Heart left ventricle (tissue), 16 donors: ENCODE measurements at regions of chr19 and their contacts with region 1.

Region 1: DNA sequence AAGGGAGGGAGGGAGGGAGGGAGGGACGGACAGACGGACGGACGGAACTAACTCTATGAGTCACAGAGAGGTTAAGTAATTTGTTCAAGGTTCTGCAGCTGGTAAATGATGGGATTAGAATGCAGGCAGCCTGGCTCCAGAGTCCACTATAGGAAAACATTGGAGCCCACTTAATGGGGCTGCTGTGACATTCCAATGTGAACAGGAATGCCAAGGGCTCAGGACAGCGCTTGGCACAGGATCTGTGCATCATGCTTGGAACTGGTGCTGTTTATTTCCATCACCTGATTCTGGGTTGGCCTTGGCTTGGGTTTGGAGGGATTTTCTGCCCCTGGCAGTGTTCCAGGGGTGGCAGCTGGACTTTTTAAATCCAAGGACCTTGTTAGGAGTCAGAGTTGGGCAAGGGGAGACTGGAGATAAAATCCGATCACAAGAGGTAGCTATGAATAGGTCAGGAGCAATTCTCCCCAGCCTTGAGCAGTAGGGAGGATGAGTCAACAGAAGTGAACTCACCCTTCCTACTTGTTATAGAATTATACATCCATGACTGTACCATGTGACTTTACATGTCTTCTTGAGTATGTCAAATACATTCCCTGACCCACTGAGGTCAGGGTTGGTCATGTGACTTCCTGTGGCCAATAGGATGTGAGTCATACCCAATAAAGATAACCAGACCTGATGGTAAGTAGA is 7.8 kb upstream of the HIF3A start:
- DNase-seq: peak in 4 of 5 donors; percentile 46 to 77 (median 60)
- ATAC-seq: peak; percentile 78 to 91 (median 86)
- H3K4me3 ChIP-seq: no peak overlapping the region
- H3K27ac ChIP-seq: peak overlapping the region; percentile 16 to 85 (median 68)
- H3K4me1 ChIP-seq: peaks cover 0 to 20% (median 10%) of the 10 kb centered on the region in 12 donors
- H3K27me3 ChIP-seq: no peaks in the 10 kb centered on the region
- CTCF ChIP-seq: no peak
- POLR2A ChIP-seq: no peak

Region 2: DNA sequence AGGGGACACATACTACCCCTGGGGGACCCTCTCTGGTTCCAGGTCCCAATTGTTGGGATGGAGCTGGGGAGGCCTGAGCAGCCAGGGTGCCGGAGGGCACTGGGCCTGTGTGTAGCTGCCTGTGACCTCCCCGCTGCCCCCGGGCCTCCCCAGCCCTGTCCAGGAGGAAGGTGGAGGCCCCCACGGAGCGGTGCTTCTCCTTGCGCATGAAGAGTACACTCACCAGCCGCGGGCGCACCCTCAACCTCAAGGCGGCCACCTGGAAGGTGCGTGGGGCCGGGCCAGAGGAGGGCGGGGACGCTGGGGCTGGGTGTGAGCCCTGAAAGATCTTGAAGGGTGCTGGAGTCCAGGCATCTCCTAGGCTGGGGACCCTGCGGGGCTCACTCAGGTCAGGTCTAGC is 19.5 kb after region 1 on chr19:
- intact Hi-C with region 1: no loop called
- DNase-seq: no peak
- ATAC-seq: peak in 1 of 4 donors; percentile 2
- H3K4me3 ChIP-seq: no peak overlapping the region
- H3K27ac ChIP-seq: no peak overlapping the region
- H3K4me1 ChIP-seq: peaks cover 0 to 22% (median 5%) of the 10 kb centered on the region in 12 donors
- H3K27me3 ChIP-seq: no peaks in the 10 kb centered on the region
- CTCF ChIP-seq: no peak
- POLR2A ChIP-seq: no peak

Region 3: GRCh38 chr19:46346821-46347571 is 58.0 kb after region 1 on chr19 and contains the start of gene PPP5C:
- intact Hi-C with region 1: loop called in 5 of 10 experiments (anchors 5 to 10 kb)
- DNase-seq: peak; percentile 92 to 97 (median 96)
- ATAC-seq: peak; percentile 48 to 83 (median 81)
- H3K4me3 ChIP-seq: peak within 1 kb of the TSS; percentile 70 to 100 (median 96)
- H3K27ac ChIP-seq: peak within 1 kb of the TSS; percentile 52 to 96 (median 90)
- H3K4me1 ChIP-seq: peaks cover 7 to 56% (median 46%) of the 10 kb centered on the region in 12 donors
- H3K27me3 ChIP-seq: no peaks in the 10 kb centered on the region
- CTCF ChIP-seq: peak; percentile 29 to 78 (median 58)
- POLR2A ChIP-seq: peak in 1 of 2 donors; percentile 86
- total RNA-seq, gene PPP5C: 69.9 to 115 (median 77.1) TPM

Region 4: DNA sequence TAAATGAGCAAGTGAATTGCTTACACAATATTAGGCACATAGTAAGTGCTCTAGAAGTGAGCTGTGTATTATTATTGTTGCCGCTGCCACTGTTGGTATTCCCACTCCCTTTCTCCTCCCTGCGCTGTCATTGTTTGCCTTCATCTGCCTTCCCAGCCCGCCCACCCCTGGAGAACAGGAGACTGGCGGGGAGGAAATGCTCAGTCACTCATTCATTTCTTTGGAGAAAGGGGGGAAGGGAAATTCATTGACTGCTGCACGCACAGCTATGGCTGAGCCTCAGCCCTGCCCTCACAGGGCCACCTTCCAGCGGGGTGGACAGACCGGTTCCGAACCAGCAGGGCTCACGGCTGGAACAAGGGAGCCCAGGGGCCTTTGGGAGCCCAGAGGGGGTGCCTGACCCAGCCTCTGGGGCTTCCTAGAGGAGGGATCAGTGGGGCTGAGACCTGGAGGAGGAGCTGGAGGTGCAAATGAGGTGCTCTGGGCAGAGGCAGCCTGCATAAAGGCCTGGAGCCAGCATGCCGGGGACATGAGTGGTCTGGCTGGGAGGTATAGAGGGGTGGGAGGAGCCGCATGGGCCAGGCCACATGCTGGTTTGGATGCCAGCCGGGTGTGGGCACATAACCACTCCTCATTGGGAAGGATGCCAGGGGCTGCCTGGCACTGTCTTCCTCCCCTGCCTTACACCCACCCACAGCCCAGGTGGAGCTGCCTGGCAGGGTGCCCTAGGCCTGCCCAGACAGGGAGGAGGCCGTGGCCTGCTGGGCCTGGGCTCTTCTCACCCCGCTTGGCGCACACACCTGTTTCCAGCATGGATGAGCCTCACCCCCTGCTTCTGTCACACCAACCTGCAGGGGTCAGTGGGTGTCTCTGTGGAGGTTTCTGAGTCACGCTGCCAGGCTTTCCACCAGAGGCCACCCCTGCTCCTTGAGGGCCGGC is 84.6 kb after region 1 on chr19:
- intact Hi-C with region 1: loop called in 2 of 10 experiments (anchors 10 kb)
- DNase-seq: peak; percentile 83 to 93 (median 88)
- ATAC-seq: peak; percentile 66 to 88 (median 80)
- H3K4me3 ChIP-seq: no peak overlapping the region
- H3K27ac ChIP-seq: peak overlapping the region in 11 of 12 donors; percentile 44 to 75 (median 59)
- H3K4me1 ChIP-seq: peaks cover 3 to 53% (median 38%) of the 10 kb centered on the region in 12 donors
- H3K27me3 ChIP-seq: no peaks in the 10 kb centered on the region
- CTCF ChIP-seq: no peak
- POLR2A ChIP-seq: no peak

Region 5: GRCh38 chr19:46392243-46392801 is 103.3 kb after region 1 on chr19:
- intact Hi-C with region 1: loop called in 3 of 10 experiments (anchors 5 kb)
- DNase-seq: peak in 1 of 5 donors; percentile 42
- ATAC-seq: no peak
- H3K4me3 ChIP-seq: no peak overlapping the region
- H3K27ac ChIP-seq: no peak overlapping the region
- H3K4me1 ChIP-seq: peaks cover 0 to 5% (median 0%) of the 10 kb centered on the region in 12 donors
- H3K27me3 ChIP-seq: no peaks in the 10 kb centered on the region
- CTCF ChIP-seq: no peak
- POLR2A ChIP-seq: no peak

Region 6: DNA sequence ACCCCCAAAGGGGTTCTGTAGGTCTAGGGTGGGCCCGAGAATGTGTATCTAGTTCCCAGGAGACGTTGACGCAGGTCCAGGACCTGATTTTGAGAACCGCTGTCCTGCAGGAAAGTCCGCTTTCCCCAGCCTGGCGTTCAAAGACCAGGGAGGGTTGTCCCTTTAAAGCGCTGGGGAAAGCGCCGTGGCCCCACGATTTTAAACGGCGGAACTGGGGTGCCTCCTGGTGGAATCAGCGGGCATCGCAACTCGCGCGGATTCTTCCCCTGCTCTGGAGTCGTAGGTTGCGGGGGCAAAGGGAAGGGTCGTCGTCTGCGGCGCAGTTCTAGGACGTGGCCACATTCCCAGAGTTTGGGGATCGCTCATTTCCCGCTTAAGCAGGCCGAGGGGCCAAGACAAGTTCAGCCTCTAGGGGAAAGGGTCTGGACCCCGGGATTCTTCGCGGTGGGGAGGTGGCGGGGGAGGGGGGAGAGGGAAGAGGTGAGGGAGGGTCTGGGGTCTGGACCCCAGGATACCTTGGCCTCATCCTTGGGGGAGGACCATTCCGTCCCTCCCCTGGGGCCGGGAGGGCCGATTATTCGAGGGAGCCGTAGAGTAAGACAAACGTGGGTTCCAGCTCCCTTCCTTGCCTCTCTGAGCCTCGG is 198.9 kb after region 1 on chr19:
- intact Hi-C with region 1: loop called in 5 of 10 experiments (anchors 5 to 10 kb)
- DNase-seq: peak; percentile 69 to 88 (median 76)
- ATAC-seq: peak; percentile 55 to 76 (median 74)
- H3K4me3 ChIP-seq: peak overlapping the region in 10 of 12 donors; percentile 17 to 57 (median 42)
- H3K27ac ChIP-seq: peak overlapping the region in 1 of 12 donors; percentile 11
- H3K4me1 ChIP-seq: peaks cover under 1 to 34% (median 24%) of the 10 kb centered on the region in 12 donors
- H3K27me3 ChIP-seq: peaks cover 0 to 65% (median 48%) of the 10 kb centered on the region in 9 donors
- CTCF ChIP-seq: peak; percentile 76 to 94 (median 90)
- POLR2A ChIP-seq: no peak

Region 7: GRCh38 chr19:46513461-46514236 is 224.6 kb after region 1 on chr19:
- intact Hi-C with region 1: loop called in 3 of 10 experiments (anchors 5 to 10 kb)
- DNase-seq: peak; percentile 73 to 86 (median 80)
- ATAC-seq: peak; percentile 42 to 94 (median 90)
- H3K4me3 ChIP-seq: no peak overlapping the region
- H3K27ac ChIP-seq: no peak overlapping the region
- H3K4me1 ChIP-seq: peaks cover 0 to 8% (median 0%) of the 10 kb centered on the region in 12 donors
- H3K27me3 ChIP-seq: peaks cover 0 to 6% (median 0%) of the 10 kb centered on the region in 9 donors
- CTCF ChIP-seq: peak; percentile 64 to 99 (median 95)
- POLR2A ChIP-seq: no peak